Ascending aorta (tissue), 2 donors: ENCODE measurements at regions of chr15 and their contacts with region 1.

Region 1: GRCh38 chr15:90425726-90426346 is 37.8 kb downstream of the IQGAP1 start:
- DNase-seq: no peak
- H3K4me3 ChIP-seq: no peak overlapping the region
- H3K27ac ChIP-seq: peak overlapping the region; percentile 20 to 29
- H3K4me1 ChIP-seq: peaks cover 20 to 56% of the 10 kb centered on the region in 2 donors
- H3K27me3 ChIP-seq: no peaks in the 10 kb centered on the region
- CTCF ChIP-seq: no peak

Region 2: GRCh38 chr15:89845305-89845893 is 580.4 kb before region 1 on chr15:
- intact Hi-C with region 1: no loop called
- DNase-seq: no peak
- H3K4me3 ChIP-seq: no peak overlapping the region
- H3K27ac ChIP-seq: no peak overlapping the region
- H3K4me1 ChIP-seq: peaks cover 0 to 6% of the 10 kb centered on the region in 2 donors
- H3K27me3 ChIP-seq: no peaks in the 10 kb centered on the region
- CTCF ChIP-seq: no peak

Region 3: GRCh38 chr15:90394748-90395442 is 30.9 kb before region 1 on chr15:
- intact Hi-C with region 1: loop called (anchors 5 kb)
- DNase-seq: no peak
- H3K4me3 ChIP-seq: no peak overlapping the region
- H3K27ac ChIP-seq: peak overlapping the region; percentile 5 to 38
- H3K4me1 ChIP-seq: peaks cover 20 to 69% of the 10 kb centered on the region in 2 donors
- H3K27me3 ChIP-seq: no peaks in the 10 kb centered on the region
- CTCF ChIP-seq: no peak

Region 4: DNA sequence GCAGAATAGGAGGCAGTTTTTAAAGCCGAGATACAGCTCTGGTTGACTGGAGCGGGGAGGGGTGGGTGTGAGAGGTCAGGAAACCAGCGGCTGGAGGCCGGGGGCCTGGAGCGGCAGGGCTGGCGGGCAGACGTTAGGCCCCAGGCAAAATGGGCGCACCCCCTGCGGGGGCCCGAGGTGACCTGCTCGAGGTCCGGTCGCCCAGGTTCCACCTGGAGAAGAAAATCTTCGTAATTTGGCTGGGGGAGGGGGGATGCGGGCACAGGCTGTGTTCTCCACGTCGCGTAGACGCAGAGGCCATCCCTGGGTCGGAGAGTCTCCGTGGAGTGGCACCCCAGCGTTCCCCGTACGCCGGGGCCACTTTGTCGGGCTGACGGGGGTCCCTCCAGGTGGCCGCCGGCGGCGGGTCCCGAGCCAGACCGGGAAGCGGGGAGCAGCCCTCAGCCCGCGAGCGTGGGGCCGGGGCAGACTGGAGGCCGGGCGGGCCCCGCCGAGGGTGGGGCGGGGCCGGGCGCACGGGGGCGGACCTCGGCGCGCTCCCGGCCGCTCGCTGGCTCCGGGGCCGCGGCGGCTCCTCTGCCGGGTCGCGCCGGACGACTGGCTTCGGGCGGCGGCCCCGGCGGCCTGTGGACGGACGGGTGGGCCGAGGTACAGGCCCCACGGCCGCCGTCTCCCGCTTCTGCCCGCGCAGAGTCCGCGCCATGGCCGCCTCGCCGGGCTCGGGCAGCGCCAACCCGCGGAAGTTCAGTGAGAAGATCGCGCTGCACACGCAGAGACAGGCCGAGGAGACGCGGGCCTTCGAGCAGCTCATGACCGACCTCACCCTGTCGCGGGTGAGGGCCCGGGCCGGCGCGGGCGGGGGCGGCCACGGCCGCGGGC is 103.8 kb after region 1 on chr15 and contains the start of gene CRTC3:
- intact Hi-C with region 1: no loop called
- DNase-seq: peak in 1 of 2 donors; percentile 75
- H3K4me3 ChIP-seq: peak within 1 kb of the TSS; percentile 86 to 90
- H3K27ac ChIP-seq: peak within 1 kb of the TSS; percentile 88 to 95
- H3K4me1 ChIP-seq: peaks cover 6 to 20% of the 10 kb centered on the region in 2 donors
- H3K27me3 ChIP-seq: no peaks in the 10 kb centered on the region
- CTCF ChIP-seq: no peak
- total RNA-seq, gene CRTC3: 35.5 TPM